Gastrocnemius medialis (tissue), 4 donors: ENCODE measurements at regions of chr3 and their contacts with region 1.

Region 1: GRCh38 chr3:49539659-49540560 is 14.4 kb upstream of the BSN start:
- DNase-seq: peak; percentile 82 to 89
- ATAC-seq: peak; percentile 83 to 84
- H3K4me3 ChIP-seq: peak overlapping the region; percentile 49 to 83 (median 58)
- H3K27ac ChIP-seq: peak overlapping the region; percentile 79 to 93 (median 87)
- H3K4me1 ChIP-seq: peaks cover 27 to 36% of the 10 kb centered on the region in 2 donors
- H3K27me3 ChIP-seq: no peaks in the 10 kb centered on the region
- CTCF ChIP-seq: peak; percentile 86 to 96 (median 95)
- POLR2A ChIP-seq: peak; percentile 53 to 66

Region 2: DNA sequence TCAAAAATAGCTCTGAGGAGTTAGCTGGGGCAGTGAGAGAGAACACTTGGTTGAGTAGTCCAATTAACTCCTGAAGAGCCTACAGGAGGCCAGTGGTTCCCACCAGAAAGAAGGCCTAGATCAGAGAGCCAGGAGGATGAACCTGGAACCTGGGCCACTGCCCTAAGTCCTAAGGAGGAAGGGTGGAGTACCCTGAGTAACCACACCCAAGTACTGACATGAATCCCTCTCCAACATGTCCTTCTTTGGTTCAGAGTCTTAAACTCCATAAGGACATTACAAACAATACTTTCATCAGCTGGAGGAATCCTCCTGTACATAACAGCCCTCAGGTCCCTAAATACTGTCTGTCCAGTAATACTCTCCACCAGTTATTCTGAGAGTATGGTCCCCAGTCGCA is 237.3 kb before region 1 on chr3:
- in situ Hi-C with region 1: no loop called
- intact Hi-C with region 1: no loop called
- DNase-seq: no peak
- ATAC-seq: no peak
- H3K4me3 ChIP-seq: no peak overlapping the region
- H3K27ac ChIP-seq: no peak overlapping the region
- H3K4me1 ChIP-seq: peaks cover 2% of the 10 kb centered on the region in 2 donors
- H3K27me3 ChIP-seq: no peaks in the 10 kb centered on the region
- CTCF ChIP-seq: no peak
- POLR2A ChIP-seq: no peak

Region 3: GRCh38 chr3:49553692-49554632 is 14.1 kb after region 1 on chr3 and contains the start of gene BSN:
- in situ Hi-C with region 1: no loop called
- intact Hi-C with region 1: loop called (anchors 1 kb)
- DNase-seq: peak; percentile 67 to 84
- ATAC-seq: peak; percentile 85 to 92
- H3K4me3 ChIP-seq: peak within 1 kb of the TSS; percentile 80 to 95 (median 83)
- H3K27ac ChIP-seq: peak within 1 kb of the TSS; percentile 76 to 91 (median 82)
- H3K4me1 ChIP-seq: peaks cover 14 to 15% of the 10 kb centered on the region in 2 donors
- H3K27me3 ChIP-seq: no peaks in the 10 kb centered on the region
- CTCF ChIP-seq: no peak
- POLR2A ChIP-seq: peak in 1 of 2 donors; percentile 55
- total RNA-seq, gene BSN: 0.10 to 0.24 (median 0.21) TPM